Calu3 (cell line): ENCODE measurements at regions of chr4 and their contacts with region 1.

Region 1: DNA sequence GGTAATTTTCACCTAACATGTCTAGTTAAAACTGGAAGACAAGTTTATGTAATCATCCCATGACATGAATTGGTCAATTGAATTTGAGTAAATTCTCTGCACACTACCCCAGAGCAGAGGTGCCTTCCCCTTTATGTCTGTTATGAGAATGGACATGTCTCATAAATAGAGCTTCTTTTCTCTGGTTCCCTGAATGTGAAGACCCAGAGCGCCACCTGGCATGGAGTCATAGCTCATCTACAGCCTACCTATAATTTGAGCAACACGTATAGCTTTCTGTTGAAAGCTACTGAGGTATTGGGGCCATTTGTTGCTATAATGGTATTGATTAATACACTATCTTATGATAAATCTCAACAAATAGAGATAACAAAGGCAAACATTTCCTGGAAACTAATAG is 626.5 kb upstream of the GALNTL6 start:
- DNase-seq: peak; percentile 35
- H3K4me3 Mint-ChIP-seq: no peak overlapping the region
- H3K27ac Mint-ChIP-seq: no peak overlapping the region
- H3K4me1 Mint-ChIP-seq: no peaks in the 10 kb centered on the region
- H3K27me3 Mint-ChIP-seq: no peaks in the 10 kb centered on the region
- CTCF ChIP-seq: no peak

Region 2: DNA sequence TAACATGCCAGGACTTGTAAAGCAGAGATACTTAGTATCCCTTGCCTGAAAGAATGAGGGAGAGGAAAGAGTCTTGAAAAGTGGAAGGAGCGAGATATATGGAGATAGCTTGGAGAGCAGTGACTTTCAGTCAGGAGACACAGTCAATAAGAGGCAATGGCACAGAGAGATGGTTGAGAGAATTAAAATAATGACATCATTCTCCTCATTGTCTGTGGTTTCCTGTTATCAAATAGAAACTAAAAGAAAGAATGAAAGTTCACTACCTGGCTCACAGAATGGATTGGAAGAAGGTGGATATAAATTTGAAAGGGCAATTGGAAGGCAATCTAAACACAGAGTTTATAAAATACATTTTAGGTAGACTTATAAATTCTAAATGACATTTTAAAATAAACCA is 336.7 kb before region 1 on chr4:
- CTCF ChIA-PET with region 1: no interaction called
- intact Hi-C with region 1: no loop called
- DNase-seq: no peak
- H3K4me3 Mint-ChIP-seq: no peak overlapping the region
- H3K27ac Mint-ChIP-seq: no peak overlapping the region
- H3K4me1 Mint-ChIP-seq: no peaks in the 10 kb centered on the region
- H3K27me3 Mint-ChIP-seq: no peaks in the 10 kb centered on the region
- CTCF ChIP-seq: no peak

Region 3: DNA sequence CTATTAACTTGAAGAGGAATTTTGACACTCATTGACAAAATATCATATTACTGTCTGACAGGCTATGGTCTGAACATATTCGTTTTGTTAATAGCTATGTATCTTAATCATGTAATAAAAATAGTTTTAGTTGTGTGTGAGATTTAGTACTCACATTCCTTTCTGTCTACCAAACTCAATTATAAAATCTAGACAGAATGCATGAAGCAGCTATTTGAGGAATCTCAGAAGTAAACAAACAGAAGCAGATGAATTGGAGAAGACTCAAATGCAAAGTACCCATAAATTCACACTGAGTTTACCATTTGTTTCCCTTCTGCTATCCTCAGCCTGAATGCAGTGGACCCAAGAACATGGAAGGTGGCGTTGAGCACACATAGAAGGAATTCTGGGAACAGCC is 255.4 kb before region 1 on chr4:
- CTCF ChIA-PET with region 1: no interaction called
- intact Hi-C with region 1: no loop called
- DNase-seq: no peak
- H3K4me3 Mint-ChIP-seq: no peak overlapping the region
- H3K27ac Mint-ChIP-seq: no peak overlapping the region
- H3K4me1 Mint-ChIP-seq: no peaks in the 10 kb centered on the region
- H3K27me3 Mint-ChIP-seq: no peaks in the 10 kb centered on the region
- CTCF ChIP-seq: no peak

Region 4: DNA sequence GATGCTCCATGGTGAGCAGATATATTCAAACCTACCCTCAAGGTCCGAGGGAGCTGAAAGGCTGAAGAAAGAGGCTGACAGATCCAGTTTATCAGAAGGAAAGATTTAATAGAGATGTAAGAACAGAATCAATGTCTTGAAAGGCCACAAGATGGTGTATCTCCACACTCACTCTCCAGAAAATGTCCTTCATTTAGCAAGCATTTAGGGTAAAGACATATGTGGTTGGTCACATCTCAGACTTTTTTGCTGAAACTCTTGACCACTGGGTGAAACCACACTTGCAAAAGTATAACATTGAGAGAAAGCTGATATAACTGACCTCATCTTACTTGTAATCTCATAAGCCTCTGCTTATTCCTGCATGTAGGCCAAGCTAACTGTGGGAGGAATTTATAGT is 119.3 kb before region 1 on chr4:
- CTCF ChIA-PET with region 1: no interaction called
- intact Hi-C with region 1: loop called (anchors 5 kb)
- DNase-seq: no peak
- H3K4me3 Mint-ChIP-seq: no peak overlapping the region
- H3K27ac Mint-ChIP-seq: no peak overlapping the region
- H3K4me1 Mint-ChIP-seq: no peaks in the 10 kb centered on the region
- H3K27me3 Mint-ChIP-seq: no peaks in the 10 kb centered on the region
- CTCF ChIP-seq: no peak